Right ventricle myocardium inferior (tissue), 1 donor: ENCODE measurements at regions of chr2 and their contacts with region 1.

Region 1: GRCh38 chr2:230712443-230713330 is at the start of gene CAB39:
- DNase-seq: peak; percentile 97
- ATAC-seq: peak; percentile 97
- total RNA-seq, gene CAB39: 91.9 TPM

Region 2: DNA sequence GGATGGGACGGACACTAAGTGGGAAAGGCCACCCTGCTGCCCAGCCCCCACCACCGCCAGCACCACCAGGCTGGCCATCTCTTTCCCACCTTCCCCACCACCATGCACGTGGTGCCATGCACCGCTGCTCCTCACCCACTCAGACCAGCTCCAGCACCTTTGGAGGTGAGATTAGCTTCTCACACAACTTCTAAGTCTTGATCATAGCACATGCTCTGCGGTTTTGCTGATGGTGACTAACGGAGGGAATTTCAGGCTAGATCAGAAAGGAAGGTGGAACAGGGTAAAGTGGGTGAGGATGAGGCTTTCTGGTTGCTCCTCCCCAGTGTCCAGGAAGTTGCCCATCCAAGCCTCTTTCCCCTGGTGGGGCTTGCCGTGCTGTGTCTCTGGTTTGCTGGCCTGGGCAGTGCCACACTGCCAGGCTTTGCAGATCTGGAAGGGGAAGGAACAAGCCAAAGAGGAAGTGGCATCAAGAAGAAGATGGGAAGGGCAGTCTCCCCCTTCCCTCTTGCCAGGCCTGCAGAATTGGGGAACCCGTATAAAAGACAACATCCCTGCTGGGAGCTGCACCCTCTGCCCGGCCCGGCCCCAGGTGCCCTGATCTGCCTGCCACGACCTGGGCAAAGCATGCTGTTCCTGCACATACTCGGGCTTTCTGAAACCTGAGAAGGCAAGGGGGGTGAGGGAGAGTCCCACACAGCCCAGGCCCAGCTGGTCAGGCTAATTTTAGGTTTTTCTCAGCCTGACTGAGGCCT is 44.3 kb before region 1 on chr2:
- intact Hi-C with region 1: loop called (anchors 2 kb)
- DNase-seq: peak; percentile 77
- ATAC-seq: peak; percentile 78

Region 3: GRCh38 chr2:230758566-230759480 is 46.1 kb after region 1 on chr2:
- intact Hi-C with region 1: loop called (anchors 5 kb)
- DNase-seq: no peak
- ATAC-seq: peak; percentile 44

Region 4: GRCh38 chr2:230793572-230794359 is 81.1 kb after region 1 on chr2:
- intact Hi-C with region 1: loop called (anchors 2 kb)
- DNase-seq: peak; percentile 76
- ATAC-seq: peak; percentile 78

Region 5: GRCh38 chr2:230798769-230799399 is 86.2 kb after region 1 on chr2:
- intact Hi-C with region 1: loop called (anchors 2 kb)
- DNase-seq: no peak
- ATAC-seq: no peak